Posterior cingulate gyrus (tissue), 11 donors: ENCODE measurements at regions of chr15 and their contacts with region 1.

Region 1: GRCh38 chr15:68875377-68876116 is 54.8 kb upstream of the SPESP1 start:
- DNase-seq: peak; percentile 81 to 99 (median 96)

Region 2: DNA sequence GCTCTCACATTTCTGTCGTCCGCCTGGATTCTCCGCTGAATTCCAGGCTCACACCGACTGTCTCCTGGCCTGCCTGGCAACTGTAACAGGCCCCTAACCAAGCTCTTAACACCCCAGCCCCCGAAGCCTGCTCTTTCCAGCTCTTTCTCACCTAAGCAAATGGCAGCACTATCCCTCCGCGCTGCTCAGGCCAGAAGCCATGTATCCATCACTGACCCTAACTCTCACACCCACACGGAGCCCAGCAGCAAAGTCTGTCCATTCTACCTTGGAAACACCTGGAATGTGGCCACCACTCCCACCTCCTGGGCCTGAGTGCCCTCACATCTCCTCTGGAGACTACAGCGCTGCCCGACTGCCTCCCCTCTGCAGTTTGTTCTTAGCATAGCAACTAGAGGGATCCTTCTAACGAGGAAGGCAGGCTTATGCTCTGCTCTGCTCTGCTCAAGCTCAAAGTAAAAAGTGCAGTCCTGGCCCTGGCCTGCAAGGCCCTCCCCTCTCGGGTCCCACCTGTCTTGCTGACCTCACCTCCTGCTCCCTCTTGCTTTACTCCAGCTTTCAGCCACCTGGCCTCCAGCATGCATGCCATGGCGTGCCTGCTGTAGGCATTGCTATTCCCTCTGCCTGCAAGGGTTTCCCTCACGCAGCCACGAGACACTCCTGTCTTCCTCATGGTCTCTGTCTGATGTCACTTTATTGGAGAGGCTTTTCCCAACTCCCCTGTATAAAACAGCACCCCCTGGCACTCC is 570.8 kb before region 1 on chr15:
- intact Hi-C with region 1: loop called (anchors 5 kb)
- DNase-seq: no peak

Region 3: GRCh38 chr15:68674975-68675374 is 200.6 kb before region 1 on chr15:
- intact Hi-C with region 1: loop called (anchors 5 kb)
- DNase-seq: peak in 3 of 10 donors; percentile 13 to 56 (median 18)

Region 4: GRCh38 chr15:68783226-68784058 is 92.1 kb before region 1 on chr15:
- intact Hi-C with region 1: loop called (anchors 10 kb)
- DNase-seq: peak in 1 of 10 donors; percentile 49

Region 5: GRCh38 chr15:68806220-68807060 is 69.1 kb before region 1 on chr15:
- intact Hi-C with region 1: no loop called
- DNase-seq: peak in 7 of 10 donors; percentile 49 to 96 (median 72)

Region 6: GRCh38 chr15:68924866-68925560 is 49.5 kb after region 1 on chr15:
- intact Hi-C with region 1: loop called (anchors 5 kb)
- DNase-seq: peak; percentile 66 to 97 (median 85)